Right lobe of liver (tissue), 6 donors: ENCODE measurements at regions of chr1 and their contacts with region 1.

Region 1: DNA sequence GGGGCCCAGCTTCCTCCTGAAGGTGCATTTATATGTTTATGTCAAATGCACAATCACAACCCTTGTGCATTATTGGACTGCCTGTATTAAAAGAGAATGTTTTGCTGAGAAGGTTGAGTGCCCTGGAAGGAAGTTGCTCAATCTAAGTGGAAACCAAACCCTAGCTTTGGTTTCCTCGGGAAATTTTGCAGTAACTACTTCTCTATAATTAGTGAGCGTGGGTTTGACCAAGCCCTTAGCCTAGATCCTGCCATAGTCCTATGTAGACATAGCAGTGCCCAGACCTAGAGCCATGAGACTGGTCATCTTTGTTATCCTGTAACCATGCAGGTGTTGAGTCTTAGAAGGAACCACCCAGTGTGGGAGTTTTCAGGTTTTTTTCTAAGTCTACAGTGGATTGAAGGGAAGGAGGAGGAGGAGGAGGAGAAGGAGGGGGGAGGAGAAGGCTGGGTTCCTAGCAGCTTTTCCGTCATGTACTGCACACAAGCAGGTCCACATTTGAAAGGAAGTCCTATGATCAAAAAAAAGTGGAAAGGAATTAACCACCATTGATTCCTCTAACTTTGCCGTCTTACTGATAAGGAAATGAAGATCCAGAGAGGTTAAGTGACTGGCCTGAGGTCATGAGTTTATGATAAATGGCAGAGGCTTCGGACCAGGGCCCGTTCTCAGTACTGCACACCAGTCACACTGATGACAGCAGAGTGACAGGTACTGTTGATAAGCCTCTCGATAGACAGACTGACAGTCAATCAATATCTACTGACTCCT is 72.2 kb upstream of the LYST start:
- DNase-seq: peak in 1 of 3 donors; percentile 38
- ATAC-seq: peak; percentile 17 to 48 (median 46)
- H3K4me3 ChIP-seq: no peak overlapping the region
- H3K27ac ChIP-seq: peak overlapping the region in 1 of 3 donors; percentile 40
- H3K4me1 ChIP-seq: peaks cover 0 to 29% (median 6%) of the 10 kb centered on the region in 4 donors
- H3K27me3 ChIP-seq: no peaks in the 10 kb centered on the region
- CTCF ChIP-seq: no peak
- POLR2A ChIP-seq: no peak

Region 2: DNA sequence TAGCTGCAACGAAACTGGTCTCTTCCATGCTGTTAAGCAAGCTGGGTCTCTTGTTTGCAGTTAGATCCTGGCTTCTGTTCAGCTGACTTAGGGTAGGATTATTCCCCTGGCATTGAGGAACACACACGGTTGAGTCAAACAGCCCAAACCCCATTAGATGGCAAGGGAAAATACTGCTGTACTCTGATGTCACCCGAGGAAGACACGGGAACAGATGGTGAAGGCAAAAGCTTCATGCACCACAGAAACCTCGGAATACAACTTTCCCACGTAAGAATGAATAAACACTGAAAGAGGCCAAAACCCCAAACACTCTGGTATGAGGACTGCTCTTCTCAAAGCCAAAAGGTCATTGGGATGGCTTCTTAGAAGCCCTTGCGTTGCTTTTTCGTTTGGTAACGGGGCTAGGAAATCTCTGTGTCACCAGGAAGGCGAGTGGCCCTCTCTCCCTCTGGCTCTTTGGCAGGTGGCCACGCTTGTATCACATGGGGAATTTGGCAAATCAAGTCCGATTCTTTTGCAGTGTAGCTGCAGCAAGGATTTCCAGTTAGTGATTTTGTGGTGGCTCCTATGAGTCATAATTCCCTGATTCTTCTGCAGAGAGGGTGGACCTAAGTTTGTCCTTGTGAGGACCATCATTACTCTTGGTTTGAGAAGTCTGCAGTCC is 55.5 kb before region 1 on chr1:
- intact Hi-C with region 1: loop called in 1 of 2 experiments (anchors 10 kb)
- DNase-seq: peak; percentile 89 to 94 (median 89)
- ATAC-seq: peak; percentile 88 to 93 (median 90)
- H3K4me3 ChIP-seq: peak overlapping the region; percentile 26 to 46 (median 44)
- H3K27ac ChIP-seq: peak overlapping the region; percentile 69 to 75 (median 75)
- H3K4me1 ChIP-seq: peaks cover 0 to 8% (median 2%) of the 10 kb centered on the region in 4 donors
- H3K27me3 ChIP-seq: no peaks in the 10 kb centered on the region
- CTCF ChIP-seq: no peak
- POLR2A ChIP-seq: peak; percentile 78